ENCODE measurements at regions of chr2 and their contacts with region 1.

Region 1: DNA sequence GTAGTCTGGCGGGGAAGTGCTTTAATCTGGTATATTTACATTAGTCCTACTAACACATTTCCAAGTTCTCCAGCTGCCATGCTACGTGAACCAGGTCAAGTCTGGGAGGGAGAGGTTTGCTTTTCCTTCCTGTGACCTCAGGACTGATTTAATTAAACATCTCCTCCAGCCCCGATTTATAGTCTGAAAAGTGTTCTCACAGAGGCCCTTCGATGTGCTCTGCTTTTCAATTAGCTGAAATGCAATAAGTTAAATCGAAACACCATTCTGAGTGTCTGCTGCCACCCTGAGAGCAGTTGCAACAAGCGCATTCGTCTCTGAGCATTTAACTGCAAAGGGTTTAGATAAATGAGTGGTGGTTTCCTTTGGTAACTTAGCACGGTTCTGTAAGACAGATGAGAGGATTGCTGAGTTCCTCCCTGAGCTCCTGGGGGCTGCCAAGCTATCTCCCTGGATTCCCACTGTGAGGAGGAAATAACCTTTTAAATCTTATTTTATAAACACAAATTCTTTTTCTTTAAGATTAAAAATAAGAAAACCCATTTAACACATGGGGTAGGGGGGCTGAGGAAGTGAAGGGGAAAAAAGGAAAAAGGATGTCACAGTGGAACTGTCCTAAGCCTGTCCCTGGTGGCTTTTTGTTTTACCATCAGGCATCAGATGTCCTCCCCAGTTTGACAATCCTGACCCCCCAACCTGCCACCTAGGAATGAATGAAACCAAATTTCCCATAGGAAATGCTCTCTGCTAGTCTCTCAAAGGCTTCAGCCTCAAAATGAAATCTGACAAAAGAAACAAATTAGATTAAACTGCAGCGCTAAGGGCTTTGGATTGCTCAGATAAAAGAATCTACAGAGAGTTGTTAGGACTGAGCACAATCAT is 56.5 kb upstream of the CREB1 start:
- DNase-seq: no peak
- H3K4me3 ChIP-seq: peak overlapping the region in 1 of 4 donors; percentile 22
- H3K27ac ChIP-seq: peak overlapping the region in 2 of 4 donors; percentile 18 to 30
- H3K4me1 ChIP-seq: peaks cover 0 to 27% (median 0%) of the 10 kb centered on the region in 3 donors
- H3K27me3 ChIP-seq: no peaks in the 10 kb centered on the region
- CTCF ChIP-seq: peak in 5 of 6 experiments; percentile 47 to 84 (median 60)
- POLR2A ChIP-seq: no peak

Region 2: GRCh38 chr2:206693399-206694137 is 779.7 kb before region 1 on chr2:
- intact Hi-C with region 1: loop called (anchors 5 kb)
- DNase-seq: no peak
- H3K4me3 ChIP-seq: no peak overlapping the region
- H3K27ac ChIP-seq: no peak overlapping the region
- H3K4me1 ChIP-seq: no peaks in the 10 kb centered on the region
- H3K27me3 ChIP-seq: no peaks in the 10 kb centered on the region
- CTCF ChIP-seq: peak; percentile 48 to 72 (median 57)
- POLR2A ChIP-seq: no peak

Region 3: DNA sequence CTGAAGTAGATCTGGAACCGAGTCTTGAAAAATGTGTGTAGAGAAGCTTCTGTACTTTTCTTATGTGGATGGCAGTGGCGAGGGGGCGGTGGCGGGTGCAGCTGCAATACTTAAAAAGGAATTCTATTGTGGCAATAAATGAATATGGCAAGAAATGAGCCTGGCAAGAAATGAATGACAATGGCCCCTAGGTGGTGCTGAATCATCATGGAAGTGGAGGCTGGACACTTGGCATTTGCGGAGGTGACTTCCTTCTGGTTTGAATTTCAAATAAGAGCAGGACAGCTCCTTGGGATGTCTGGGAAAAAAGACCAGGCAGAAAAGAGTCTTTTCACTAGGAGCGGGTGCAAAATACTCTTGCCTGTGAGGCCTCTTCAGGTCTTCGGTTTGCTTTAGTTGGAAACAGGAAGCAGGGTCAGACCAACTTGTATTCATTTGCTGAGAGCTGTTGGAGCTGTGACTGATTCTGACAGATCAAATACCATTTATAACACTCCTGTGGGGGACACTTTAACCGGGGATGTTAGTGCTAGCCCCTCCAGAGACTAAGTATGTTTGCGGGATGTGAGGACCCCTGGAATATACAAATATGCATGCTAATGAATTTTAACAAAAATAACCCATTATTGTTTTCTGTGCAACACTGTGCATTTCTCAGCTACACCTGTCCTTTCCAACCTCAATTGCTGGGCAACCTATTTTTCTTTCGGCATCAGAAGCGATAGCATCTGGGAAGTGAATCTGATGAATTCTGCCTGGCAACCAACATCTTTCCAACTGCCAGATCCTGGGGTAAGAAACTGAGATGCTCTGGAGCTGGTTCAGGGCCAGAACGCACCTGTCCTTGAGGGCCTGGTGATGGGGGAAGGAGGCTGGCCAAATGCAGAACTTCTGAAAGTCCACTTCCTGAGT is 672.5 kb before region 1 on chr2:
- intact Hi-C with region 1: loop called (anchors 5 kb)
- DNase-seq: no peak
- H3K4me3 ChIP-seq: peak overlapping the region in 1 of 4 donors; percentile 24
- H3K27ac ChIP-seq: no peak overlapping the region
- H3K4me1 ChIP-seq: peaks cover 0 to 17% (median 0%) of the 10 kb centered on the region in 3 donors
- H3K27me3 ChIP-seq: no peaks in the 10 kb centered on the region
- CTCF ChIP-seq: peak in 5 of 6 experiments; percentile 42 to 76 (median 64)
- POLR2A ChIP-seq: no peak

Region 4: GRCh38 chr2:206981739-206982340 is 491.4 kb before region 1 on chr2:
- intact Hi-C with region 1: loop called (anchors 2 kb)
- DNase-seq: no peak
- H3K4me3 ChIP-seq: no peak overlapping the region
- H3K27ac ChIP-seq: no peak overlapping the region
- H3K4me1 ChIP-seq: peaks cover 0 to 37% (median 0%) of the 10 kb centered on the region in 3 donors
- H3K27me3 ChIP-seq: no peaks in the 10 kb centered on the region
- CTCF ChIP-seq: peak; percentile 32 to 81 (median 70)
- POLR2A ChIP-seq: no peak

Region 5: DNA sequence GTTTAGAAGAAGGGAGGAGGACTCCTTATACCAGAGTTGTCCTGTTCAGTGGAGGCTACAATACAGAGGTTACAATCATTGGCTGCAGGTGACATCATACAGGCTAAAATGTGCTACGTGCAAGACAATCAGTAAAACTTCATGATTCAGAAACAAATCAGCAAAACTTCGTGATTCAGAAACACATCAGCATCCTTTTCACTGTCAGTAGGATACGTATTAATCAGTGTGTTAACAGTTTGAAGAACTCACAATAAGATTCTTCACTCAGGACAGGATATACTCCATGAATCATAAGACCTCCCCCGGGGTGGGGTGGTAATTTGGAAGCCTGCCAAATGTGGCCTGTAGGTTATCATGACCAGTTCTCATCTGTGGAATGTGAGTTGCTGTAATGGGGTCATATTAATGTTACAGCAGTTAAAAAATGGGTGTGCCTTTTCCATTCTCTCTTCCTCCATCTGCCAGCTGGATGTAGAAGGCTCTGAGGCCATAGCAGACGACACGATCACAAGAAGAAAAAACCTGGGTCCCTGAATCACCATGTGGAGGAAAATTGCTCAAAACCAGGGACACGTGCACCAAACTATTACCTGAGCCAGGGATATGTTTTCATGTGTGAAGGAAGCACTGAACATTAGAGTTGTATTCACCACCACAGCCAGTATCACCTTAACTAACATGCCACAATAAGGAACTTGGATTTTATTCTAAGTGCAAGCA is 78.3 kb before region 1 on chr2:
- intact Hi-C with region 1: no loop called
- DNase-seq: no peak
- H3K4me3 ChIP-seq: no peak overlapping the region
- H3K27ac ChIP-seq: peak overlapping the region in 2 of 4 donors; percentile 2 to 69
- H3K4me1 ChIP-seq: peaks cover 0 to 8% (median 0%) of the 10 kb centered on the region in 3 donors
- H3K27me3 ChIP-seq: no peaks in the 10 kb centered on the region
- CTCF ChIP-seq: no peak
- POLR2A ChIP-seq: no peak

Region 6: DNA sequence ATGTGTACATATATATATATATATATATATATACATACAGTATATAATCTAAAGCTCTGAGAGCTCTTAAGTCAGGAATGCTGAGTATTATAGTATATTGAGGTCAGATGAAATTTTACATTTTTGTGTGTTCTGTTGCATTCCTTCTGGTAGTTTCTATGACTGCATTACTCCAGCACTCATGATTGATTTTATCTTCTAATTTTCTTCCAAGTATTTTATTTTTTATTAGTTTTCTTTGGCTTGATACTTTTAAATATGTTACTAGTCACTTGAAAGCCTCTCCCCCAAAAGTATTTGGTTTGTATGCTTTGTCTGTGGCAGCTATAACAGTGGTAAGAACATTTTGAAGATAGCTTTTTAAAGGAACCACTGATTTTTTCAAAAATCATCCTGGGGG is 126.9 kb after region 1 on chr2:
- intact Hi-C with region 1: no loop called
- DNase-seq: no peak
- H3K4me3 ChIP-seq: no peak overlapping the region
- H3K27ac ChIP-seq: no peak overlapping the region
- H3K4me1 ChIP-seq: no peaks in the 10 kb centered on the region
- H3K27me3 ChIP-seq: no peaks in the 10 kb centered on the region
- CTCF ChIP-seq: no peak
- POLR2A ChIP-seq: no peak

Region 7: GRCh38 chr2:207676827-207677354 is 203.6 kb after region 1 on chr2:
- intact Hi-C with region 1: no loop called
- DNase-seq: no peak
- H3K4me3 ChIP-seq: no peak overlapping the region
- H3K27ac ChIP-seq: peak overlapping the region in 2 of 4 donors; percentile 9 to 52
- H3K4me1 ChIP-seq: peaks cover 0 to 9% (median 0%) of the 10 kb centered on the region in 3 donors
- H3K27me3 ChIP-seq: peaks cover 0 to 12% (median 0%) of the 10 kb centered on the region in 4 donors
- CTCF ChIP-seq: no peak
- POLR2A ChIP-seq: no peak

Region 8: GRCh38 chr2:207750345-207750744 is 277.1 kb after region 1 on chr2:
- intact Hi-C with region 1: no loop called
- DNase-seq: no peak
- H3K4me3 ChIP-seq: no peak overlapping the region
- H3K27ac ChIP-seq: no peak overlapping the region
- H3K4me1 ChIP-seq: no peaks in the 10 kb centered on the region
- H3K27me3 ChIP-seq: no peaks in the 10 kb centered on the region
- CTCF ChIP-seq: no peak
- POLR2A ChIP-seq: no peak